Right ventricle myocardium superior (tissue), 1 donor: ENCODE measurements at regions of chr19 and their contacts with region 1.

Region 1: DNA sequence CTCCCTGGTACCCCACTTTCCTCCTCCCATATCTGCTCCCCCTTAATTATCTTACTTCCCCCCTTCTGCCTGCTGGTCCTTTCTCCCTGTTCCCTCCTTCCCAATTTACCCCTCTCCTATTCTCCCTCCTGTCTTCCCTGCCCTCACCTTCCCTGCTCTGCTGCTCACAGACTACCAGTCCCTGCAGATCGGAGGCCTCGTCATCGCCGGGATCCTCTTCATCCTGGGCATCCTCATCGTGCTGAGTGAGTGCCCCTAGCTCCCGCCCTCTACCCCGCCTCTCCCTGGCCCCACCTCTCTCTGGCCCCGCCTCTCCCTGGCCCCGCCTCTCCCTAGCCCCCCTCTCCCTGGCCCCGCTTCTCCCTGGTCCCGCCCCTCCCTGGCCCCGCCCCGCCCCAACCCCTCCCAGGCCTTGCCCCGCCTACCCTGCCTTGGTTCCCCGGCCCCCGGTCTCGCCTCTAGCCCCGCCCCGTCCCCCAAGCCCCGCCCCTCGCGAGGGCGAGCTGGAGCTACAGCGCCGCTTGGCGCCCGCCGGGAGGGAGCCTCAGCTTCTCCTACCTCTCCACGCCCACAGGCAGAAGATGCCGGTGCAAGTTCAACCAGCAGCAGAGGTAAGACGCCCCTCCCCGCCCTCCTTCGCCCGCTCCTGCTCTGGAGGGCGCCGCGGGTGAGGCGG is 2.0 kb upstream of the FXYD7 start:
- DNase-seq: peak; percentile 96
- ATAC-seq: peak; percentile 62

Region 2: DNA sequence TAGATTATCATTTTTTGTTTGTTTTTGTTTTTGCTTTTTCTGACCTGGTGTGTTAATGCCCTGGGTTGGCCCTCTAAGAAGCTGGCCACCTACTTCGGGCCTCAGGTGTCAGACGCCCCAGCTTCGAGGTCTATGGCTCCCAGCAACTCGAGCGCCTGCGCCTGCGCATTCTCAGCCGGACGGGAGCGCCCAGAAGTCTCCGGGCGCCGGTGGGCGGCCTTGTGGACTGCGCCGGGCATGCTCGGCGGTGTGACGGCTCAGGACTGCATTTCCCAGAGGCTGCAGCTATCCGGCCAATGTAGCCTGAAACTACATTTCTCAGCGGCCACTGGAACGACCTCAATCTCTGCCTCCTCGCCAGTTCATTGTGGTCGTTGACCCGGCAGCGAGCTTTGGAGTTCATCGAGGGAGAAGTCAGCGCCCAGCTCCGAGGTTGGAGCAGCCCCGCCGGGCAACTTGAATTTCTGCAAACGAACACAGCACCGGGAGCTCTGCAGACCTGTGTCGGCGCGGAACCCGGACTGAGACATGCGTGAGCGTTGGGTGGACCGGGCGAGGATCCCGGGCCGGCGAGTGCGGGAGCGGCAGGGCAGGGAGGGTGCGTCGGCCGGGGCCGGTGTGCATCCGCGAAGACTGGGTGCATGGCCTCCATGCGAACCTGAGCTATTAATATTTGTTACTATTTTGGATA is 214.3 kb before region 1 on chr19 and contains the start of gene ZNF30:
- intact Hi-C with region 1: no loop called
- DNase-seq: peak; percentile 96
- ATAC-seq: peak; percentile 100
- total RNA-seq, gene ZNF30: 2.6 TPM

Region 3: DNA sequence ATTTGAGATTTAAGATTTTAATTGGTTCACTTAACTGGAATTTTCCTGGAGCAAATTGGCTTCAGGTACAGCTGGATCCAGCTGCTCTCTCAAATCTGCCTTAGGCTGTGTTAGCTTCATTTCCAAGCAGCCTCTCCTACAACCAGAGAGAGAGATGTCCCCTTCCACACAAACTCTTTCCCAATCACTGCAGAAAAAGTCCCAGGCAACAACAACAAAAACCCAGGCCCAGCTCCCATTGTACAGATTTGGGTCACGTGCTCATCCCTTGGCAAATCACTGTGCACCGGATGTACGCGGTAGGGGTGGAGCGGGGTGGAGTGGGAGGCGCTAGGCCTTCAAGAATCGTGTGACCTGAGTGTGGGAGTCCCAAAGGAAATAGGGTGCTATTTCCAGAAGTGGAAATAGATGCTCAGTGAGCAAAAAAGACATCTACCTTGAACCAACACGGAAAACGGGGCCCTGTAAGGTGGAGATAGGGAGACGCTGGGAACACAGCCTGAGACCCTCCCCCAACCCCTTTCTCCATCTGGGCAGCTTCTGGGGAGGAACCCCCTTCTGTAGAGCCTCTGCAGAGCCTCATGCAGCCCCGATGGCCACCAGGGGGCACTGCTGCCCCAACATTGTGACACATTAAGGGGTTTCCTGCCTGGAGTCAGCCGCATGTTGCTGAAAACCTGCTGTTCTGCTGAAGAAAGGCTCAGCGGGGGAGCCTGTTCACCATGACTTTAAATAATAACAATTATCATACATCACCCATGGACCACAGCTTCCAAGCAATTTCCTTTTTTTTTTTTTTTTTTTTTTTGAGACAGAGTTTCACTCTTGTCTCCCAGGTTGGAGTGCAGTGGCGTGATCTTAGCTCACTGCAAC is 74.2 kb before region 1 on chr19:
- intact Hi-C with region 1: loop called (anchors 5 kb)
- DNase-seq: peak; percentile 94
- ATAC-seq: peak; percentile 91

Region 4: GRCh38 chr19:35247526-35248306 is 106.6 kb after region 1 on chr19:
- intact Hi-C with region 1: no loop called
- DNase-seq: no peak
- ATAC-seq: peak; percentile 69

Region 5: DNA sequence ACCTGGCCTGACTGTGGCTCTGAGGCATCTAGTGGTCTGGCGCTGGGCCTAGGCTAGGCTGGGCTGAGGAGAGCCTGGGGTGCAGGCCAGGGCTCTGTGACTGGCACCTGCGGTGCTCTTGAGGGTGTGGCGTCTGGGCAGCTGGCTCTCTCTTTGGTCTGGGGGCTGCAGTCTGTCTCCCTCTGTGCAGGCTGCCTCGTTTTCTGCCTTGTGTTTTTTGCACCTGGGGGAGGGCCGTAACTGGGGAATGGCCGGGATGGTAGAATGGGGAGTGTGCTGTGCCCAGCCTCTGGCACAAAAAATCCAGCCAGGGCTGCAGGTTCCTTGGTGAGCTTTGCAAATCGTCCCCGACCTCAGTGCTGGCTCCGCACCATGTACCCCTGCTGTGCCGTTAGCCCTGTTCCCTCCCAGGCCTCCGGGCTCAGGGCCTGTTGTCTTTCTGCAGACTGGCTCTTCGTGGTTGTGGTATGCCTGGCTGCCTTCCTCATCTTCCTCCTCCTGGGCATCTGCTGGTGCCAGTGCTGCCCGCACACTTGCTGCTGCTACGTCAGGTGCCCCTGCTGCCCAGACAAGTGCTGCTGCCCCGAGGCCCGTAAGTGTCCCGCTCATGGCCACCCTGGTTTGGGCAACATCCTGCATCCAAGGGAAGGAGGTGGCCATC is 121.1 kb after region 1 on chr19:
- intact Hi-C with region 1: loop called (anchors 5 kb)
- DNase-seq: no peak
- ATAC-seq: peak; percentile 10